H1 (cell line): ENCODE measurements at regions of chr11 and their contacts with region 1.

Region 1: GRCh38 chr11:67373925-67374618 is 674 bp upstream of the CLCF1 start:
- DNase-seq: peak; percentile 78 to 79
- H3K4me3 ChIP-seq: peak overlapping the region; percentile 41 to 77 (median 51)
- H3K27ac ChIP-seq: no peak overlapping the region
- H3K4me1 ChIP-seq: peaks cover 0 to 45% (median 38%) of the 10 kb centered on the region in 4 experiments; a peak in 6 of 7 replicates
- H3K27me3 ChIP-seq: peaks cover 7 to 68% (median 57%) of the 10 kb centered on the region in 4 experiments
- CTCF ChIP-seq: peak in 2 of 3 experiments; percentile 29 to 34; a peak in 3 of 4 replicates
- EP300 ChIP-seq: no peak
- POLR2A ChIP-seq: no peak
- RAD21 ChIP-seq: peak in 1 of 2 experiments; percentile 3; a peak in 1 of 4 replicates

Region 2: GRCh38 chr11:67391304-67392132 is 17.4 kb after region 1 on chr11 and contains the start of gene RAD9A:
- CTCF ChIA-PET with region 1: interaction called, 129 read pairs
- POLR2A ChIA-PET with region 1: interaction called, 6 read pairs
- DNase-seq: peak; percentile 67 to 91
- H3K4me3 ChIP-seq: peak within 1 kb of the TSS; percentile 63 to 88 (median 69)
- H3K27ac ChIP-seq: peak within 1 kb of the TSS; percentile 35; the same call in 1 of the 2 replicates
- H3K4me1 ChIP-seq: peaks cover 0 to 12% (median 7%) of the 10 kb centered on the region in 4 experiments; a peak in 4 of 7 replicates
- H3K27me3 ChIP-seq: no peaks in the 10 kb centered on the region; a peak in 2 of 7 replicates
- CTCF ChIP-seq: no peak
- EP300 ChIP-seq: peak in 1 of 2 experiments; percentile 78; a peak in 2 of 3 replicates
- POLR2A ChIP-seq: peak in 1 of 2 experiments; percentile 56; a peak in 2 of 3 replicates
- RAD21 ChIP-seq: peak in 1 of 2 experiments; percentile 1; a peak in 1 of 4 replicates
- total RNA-seq, gene RAD9A: 20.8 and 22.2 TPM in 2 replicates